GM10248 (cell line): ENCODE measurements at regions of chr12 and their contacts with region 1.

Region 1: GRCh38 chr12:44930972-44931600 is 55.0 kb upstream of the NELL2 start:
- DNase-seq: peak; percentile 41
- CTCF ChIP-seq: peak; percentile 48

Region 2: GRCh38 chr12:43004908-43005307 is 1926.2 kb before region 1 on chr12:
- CTCF ChIA-PET with region 1: no interaction called
- POLR2A ChIA-PET with region 1: no interaction called
- DNase-seq: no peak
- CTCF ChIP-seq: no peak

Region 3: DNA sequence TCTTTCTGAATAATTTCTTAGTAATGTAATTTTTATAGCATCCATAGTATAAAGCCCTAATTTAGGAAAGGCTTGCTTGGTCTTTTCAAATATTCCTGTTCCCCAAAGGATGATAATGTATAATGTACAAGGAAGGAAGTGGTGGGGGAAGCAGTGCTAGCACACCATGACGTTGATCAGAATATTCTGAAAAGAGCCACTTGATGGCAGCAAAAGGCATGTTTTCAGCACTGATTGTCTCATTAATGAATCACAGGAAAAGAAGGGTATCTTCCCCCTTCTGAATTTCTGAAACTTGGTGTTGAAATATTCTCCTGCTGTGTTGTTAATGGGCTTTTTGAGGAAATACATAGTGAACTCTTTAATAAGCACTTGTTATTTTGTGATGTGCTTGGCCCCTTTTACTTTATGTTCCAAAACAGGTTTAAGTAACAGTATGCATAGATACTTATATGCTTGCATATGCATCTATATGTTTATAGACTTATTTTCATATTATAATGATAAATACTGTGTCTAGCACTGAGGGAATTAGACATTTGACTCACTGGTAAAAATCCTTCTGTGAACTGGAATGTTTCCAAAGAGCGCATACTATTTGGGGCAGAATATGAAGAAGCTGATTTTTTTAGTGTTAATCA is 973.2 kb before region 1 on chr12:
- CTCF ChIA-PET with region 1: interaction called, 15 read pairs
- POLR2A ChIA-PET with region 1: no interaction called
- DNase-seq: peak; percentile 47
- CTCF ChIP-seq: peak; percentile 55

Region 4: GRCh38 chr12:44015335-44015941 is 915.6 kb before region 1 on chr12:
- CTCF ChIA-PET with region 1: interaction called, 21 read pairs
- POLR2A ChIA-PET with region 1: no interaction called
- DNase-seq: peak; percentile 21
- CTCF ChIP-seq: peak; percentile 47

Region 5: DNA sequence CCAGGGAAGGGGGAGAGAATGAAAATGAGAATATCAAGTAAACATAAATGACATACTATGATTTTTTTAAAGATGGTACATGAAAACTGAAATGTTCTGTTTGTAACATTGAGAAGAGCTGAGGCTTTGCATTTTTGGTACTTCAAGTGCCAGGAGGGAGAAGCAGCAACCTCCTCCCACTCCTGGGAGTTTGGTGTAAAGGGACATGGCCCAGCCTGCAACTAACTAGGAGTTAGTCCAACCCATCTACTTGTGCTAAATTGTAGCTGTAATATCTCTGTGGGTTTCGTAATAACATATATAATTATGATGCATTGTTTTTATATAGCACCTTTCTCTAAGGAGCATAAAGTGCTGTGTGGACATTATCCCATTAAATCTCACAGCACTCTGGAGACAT is 572.5 kb before region 1 on chr12:
- CTCF ChIA-PET with region 1: no interaction called
- POLR2A ChIA-PET with region 1: no interaction called
- DNase-seq: no peak
- CTCF ChIP-seq: no peak

Region 6: GRCh38 chr12:44942714-44943113 is 11.6 kb after region 1 on chr12:
- CTCF ChIA-PET with region 1: interaction called, 12 read pairs
- POLR2A ChIA-PET with region 1: no interaction called
- DNase-seq: no peak
- CTCF ChIP-seq: no peak

Region 7: GRCh38 chr12:44960423-44960822 is 29.3 kb after region 1 on chr12:
- CTCF ChIA-PET with region 1: no interaction called
- POLR2A ChIA-PET with region 1: no interaction called
- DNase-seq: no peak
- CTCF ChIP-seq: no peak